HepG2 (cell line): ENCODE measurements at regions of chr2 and their contacts with region 1.

Region 1: DNA sequence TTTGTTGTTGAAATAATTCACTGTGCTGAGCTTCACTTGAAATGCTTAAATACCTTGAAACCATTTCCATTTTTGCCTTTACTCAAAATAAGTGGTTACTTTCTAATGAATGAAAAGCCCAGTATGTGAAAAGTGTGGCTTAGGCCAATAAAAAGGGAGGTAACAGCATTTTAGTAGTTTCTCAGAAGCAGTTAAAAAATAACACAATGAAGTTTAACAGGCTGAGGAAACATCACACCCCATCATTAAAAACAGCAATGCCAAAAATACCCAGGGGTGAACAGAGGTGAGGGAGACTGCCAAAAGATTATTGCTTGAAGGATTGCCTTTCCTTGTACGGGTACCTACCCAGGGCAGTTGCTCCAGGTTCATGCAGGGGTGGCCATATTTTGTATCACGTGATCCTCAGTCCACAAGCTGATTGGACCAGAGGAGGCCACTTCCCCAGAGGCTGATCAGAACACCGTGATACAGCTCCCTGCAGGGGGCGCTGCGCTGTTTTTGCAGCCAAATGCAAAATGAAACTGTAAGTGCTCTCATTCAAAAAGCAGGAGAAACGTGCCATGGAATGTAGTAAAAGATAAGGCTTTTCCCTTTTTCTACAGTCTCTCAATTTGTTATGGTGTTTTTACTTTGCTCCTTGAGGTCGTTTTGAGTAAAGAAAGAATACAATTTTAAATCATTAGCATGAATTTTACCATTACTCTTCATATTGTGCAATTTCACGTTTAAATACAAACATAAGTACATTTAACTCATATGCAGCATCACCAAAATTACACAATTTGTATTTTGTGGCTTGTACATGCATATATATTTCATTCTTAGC is 70.2 kb upstream of the SH3BP4 start:
- DNase-seq: peak; percentile 98
- ATAC-seq: peak; percentile 96
- H3K4me3 ChIP-seq: peak overlapping the region; percentile 4 to 64 (median 38); a peak in 3 of 6 replicates
- H3K27ac ChIP-seq: peak overlapping the region; percentile 84
- H3K4me1 ChIP-seq: peaks cover 68% of the 10 kb centered on the region
- H3K27me3 ChIP-seq: no peaks in the 10 kb centered on the region
- CTCF ChIP-seq: peak; percentile 97
- EP300 ChIP-seq: peak in 1 of 2 experiments; percentile 58; a peak in 2 of 4 replicates
- POLR2A ChIP-seq: peak; percentile 54 to 58; a peak in 3 of 4 replicates
- RAD21 ChIP-seq: peak; percentile 92

Region 2: GRCh38 chr2:234674781-234675201 is 206.8 kb before region 1 on chr2:
- CTCF ChIA-PET with region 1: no interaction called
- POLR2A ChIA-PET with region 1: interaction called, 71 read pairs
- in situ Hi-C with region 1: no loop called
- intact Hi-C with region 1: loop called (anchors 5 kb)
- DNase-seq: peak; percentile 80
- ATAC-seq: peak; percentile 43
- H3K4me3 ChIP-seq: no peak overlapping the region
- H3K27ac ChIP-seq: peak overlapping the region; percentile 94
- H3K4me1 ChIP-seq: peaks cover 77% of the 10 kb centered on the region
- H3K27me3 ChIP-seq: no peaks in the 10 kb centered on the region
- CTCF ChIP-seq: no peak
- EP300 ChIP-seq: peak in 1 of 2 experiments; percentile 64; a peak in 2 of 4 replicates
- POLR2A ChIP-seq: no peak
- RAD21 ChIP-seq: no peak

Region 3: GRCh38 chr2:234732404-234733092 is 149.1 kb before region 1 on chr2:
- CTCF ChIA-PET with region 1: no interaction called
- POLR2A ChIA-PET with region 1: interaction called, 12 read pairs
- in situ Hi-C with region 1: no loop called
- intact Hi-C with region 1: no loop called
- DNase-seq: no peak
- ATAC-seq: no peak
- H3K4me3 ChIP-seq: no peak overlapping the region
- H3K27ac ChIP-seq: no peak overlapping the region
- H3K4me1 ChIP-seq: peaks cover 45% of the 10 kb centered on the region
- H3K27me3 ChIP-seq: no peaks in the 10 kb centered on the region
- CTCF ChIP-seq: no peak
- EP300 ChIP-seq: no peak
- POLR2A ChIP-seq: no peak
- RAD21 ChIP-seq: no peak

Region 4: DNA sequence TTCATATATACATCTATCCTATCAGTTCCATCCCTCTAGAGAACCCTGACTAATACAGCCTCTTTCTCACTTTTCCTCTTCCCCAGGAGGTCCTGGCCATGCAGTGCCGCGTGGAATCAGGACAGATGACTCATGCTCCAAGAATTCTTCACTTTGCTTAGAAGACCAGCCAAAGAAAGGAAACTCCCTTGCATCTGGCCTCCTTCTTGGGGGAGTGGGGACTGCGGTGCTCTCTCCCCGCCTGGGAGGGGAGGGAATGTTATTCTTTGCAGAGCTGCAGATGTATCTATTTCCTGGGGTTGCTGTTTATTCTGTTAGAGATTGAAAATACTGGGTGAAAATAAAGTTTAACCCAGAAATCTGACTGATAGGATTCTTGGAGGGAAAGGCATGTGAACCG is 41.3 kb before region 1 on chr2:
- CTCF ChIA-PET with region 1: no interaction called
- POLR2A ChIA-PET with region 1: interaction called, 24 read pairs
- in situ Hi-C with region 1: no loop called
- intact Hi-C with region 1: no loop called
- DNase-seq: peak; percentile 69
- ATAC-seq: peak; percentile 26
- H3K4me3 ChIP-seq: no peak overlapping the region
- H3K27ac ChIP-seq: no peak overlapping the region
- H3K4me1 ChIP-seq: peaks cover 95% of the 10 kb centered on the region
- H3K27me3 ChIP-seq: no peaks in the 10 kb centered on the region
- CTCF ChIP-seq: no peak
- EP300 ChIP-seq: peak in 1 of 2 experiments; percentile 24; a peak in 1 of 4 replicates
- POLR2A ChIP-seq: no peak
- RAD21 ChIP-seq: no peak

Region 5: DNA sequence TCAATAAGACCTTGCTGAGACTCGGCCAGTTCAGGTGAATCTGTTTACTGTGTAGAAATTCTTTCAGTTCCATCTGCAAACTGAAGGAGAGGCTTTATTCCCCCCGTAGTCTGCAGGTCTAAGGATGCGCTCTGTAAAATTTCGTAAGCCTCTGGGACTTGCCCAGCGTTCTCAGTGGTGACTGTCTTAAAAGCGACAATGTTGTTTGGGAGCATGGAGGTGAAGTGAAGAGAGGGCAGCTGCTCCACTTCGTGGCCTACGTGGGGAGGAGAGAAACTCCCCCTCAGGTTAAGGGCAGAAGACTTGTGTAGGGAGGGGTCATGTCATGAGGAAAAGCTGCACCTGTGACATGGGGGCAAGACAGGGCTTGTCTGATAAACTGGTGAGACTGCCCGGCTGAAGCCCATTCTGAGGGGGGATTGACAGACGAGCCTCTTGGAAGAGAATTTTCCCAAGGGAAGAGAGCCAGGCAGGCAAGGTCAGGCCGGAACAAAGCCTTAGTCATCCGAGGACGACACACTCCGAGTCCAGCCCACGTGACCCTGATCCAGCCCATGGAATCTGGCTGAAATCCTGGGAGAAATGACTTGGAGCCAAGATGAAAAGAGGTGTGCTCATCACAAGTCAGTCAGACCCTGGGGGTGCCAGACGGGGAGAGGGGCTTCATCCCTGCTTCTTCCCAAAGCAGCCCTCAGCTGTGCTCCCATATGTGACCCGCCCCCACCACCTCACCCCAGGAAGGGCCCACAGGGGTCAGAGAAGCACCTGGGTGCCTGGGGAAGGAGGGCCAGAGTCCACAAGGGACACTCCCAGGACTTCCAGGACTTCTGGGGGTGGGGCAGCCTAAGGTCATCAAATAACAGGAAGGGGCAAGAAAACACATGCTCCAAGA is 18.3 kb before region 1 on chr2:
- CTCF ChIA-PET with region 1: no interaction called
- POLR2A ChIA-PET with region 1: interaction called, 43 read pairs
- in situ Hi-C with region 1: no loop called
- intact Hi-C with region 1: no loop called
- DNase-seq: peak; percentile 88
- ATAC-seq: peak; percentile 79
- H3K4me3 ChIP-seq: no peak overlapping the region
- H3K27ac ChIP-seq: peak overlapping the region; percentile 88
- H3K4me1 ChIP-seq: peaks cover 96% of the 10 kb centered on the region
- H3K27me3 ChIP-seq: no peaks in the 10 kb centered on the region
- CTCF ChIP-seq: 0 out of 2 replicates have a peak, but pooled peaks have one; percentile 3
- EP300 ChIP-seq: peak in 1 of 2 experiments; percentile 53; a peak in 1 of 4 replicates
- POLR2A ChIP-seq: 0 out of 4 replicates have a peak, but pooled peaks of 1 of the 2 experiments have one; percentile 23
- RAD21 ChIP-seq: no peak; the same call in 1 of the 2 replicates

Region 6: GRCh38 chr2:234996069-234996940 is 114.7 kb after region 1 on chr2:
- CTCF ChIA-PET with region 1: no interaction called
- POLR2A ChIA-PET with region 1: interaction called, 17 read pairs
- in situ Hi-C with region 1: no loop called
- intact Hi-C with region 1: loop called (anchors 1 kb)
- DNase-seq: peak; percentile 86
- ATAC-seq: peak; percentile 13
- H3K4me3 ChIP-seq: peak overlapping the region in 1 of 3 experiments; percentile 2; a peak in 1 of 6 replicates
- H3K27ac ChIP-seq: peak overlapping the region; percentile 75
- H3K4me1 ChIP-seq: peaks cover 100% of the 10 kb centered on the region
- H3K27me3 ChIP-seq: no peaks in the 10 kb centered on the region
- CTCF ChIP-seq: no peak
- EP300 ChIP-seq: peak in 1 of 2 experiments; percentile 33; a peak in 1 of 4 replicates
- POLR2A ChIP-seq: no peak
- RAD21 ChIP-seq: peak; percentile 19; the same call in 1 of the 2 replicates

Region 7: GRCh38 chr2:235157746-235158482 is 276.3 kb after region 1 on chr2:
- CTCF ChIA-PET with region 1: no interaction called
- POLR2A ChIA-PET with region 1: no interaction called
- in situ Hi-C with region 1: no loop called
- intact Hi-C with region 1: no loop called
- DNase-seq: no peak
- ATAC-seq: no peak
- H3K4me3 ChIP-seq: no peak overlapping the region
- H3K27ac ChIP-seq: no peak overlapping the region
- H3K4me1 ChIP-seq: no peaks in the 10 kb centered on the region
- H3K27me3 ChIP-seq: peaks cover 0 to 39% of the 10 kb centered on the region in 2 experiments; a peak in 3 of 5 replicates
- CTCF ChIP-seq: no peak
- EP300 ChIP-seq: no peak
- POLR2A ChIP-seq: no peak
- RAD21 ChIP-seq: no peak